CD8-positive, alpha-beta memory T cell (primary cell): ENCODE measurements at regions of chr1 and their contacts with region 1.

Region 1: GRCh38 chr1:148388260-148389027 is 94.7 kb downstream of the PPIAL4G start:
- DNase-seq: peak; percentile 77 to 92 (median 84)
- H3K4me3 ChIP-seq: peak overlapping the region; percentile 56
- H3K4me3 Mint-ChIP-seq: peak overlapping the region; percentile 91 to 97 (median 94)
- H3K27ac ChIP-seq: peak overlapping the region; percentile 96
- H3K27ac Mint-ChIP-seq: peak overlapping the region; percentile 94 to 100 (median 99)
- H3K4me1 ChIP-seq: peaks cover 18% of the 10 kb centered on the region
- H3K4me1 Mint-ChIP-seq: peaks cover 24 to 47% (median 42%) of the 10 kb centered on the region in 3 donors
- H3K27me3 ChIP-seq: no peaks in the 10 kb centered on the region
- H3K27me3 Mint-ChIP-seq: no peaks in the 10 kb centered on the region

Region 2: DNA sequence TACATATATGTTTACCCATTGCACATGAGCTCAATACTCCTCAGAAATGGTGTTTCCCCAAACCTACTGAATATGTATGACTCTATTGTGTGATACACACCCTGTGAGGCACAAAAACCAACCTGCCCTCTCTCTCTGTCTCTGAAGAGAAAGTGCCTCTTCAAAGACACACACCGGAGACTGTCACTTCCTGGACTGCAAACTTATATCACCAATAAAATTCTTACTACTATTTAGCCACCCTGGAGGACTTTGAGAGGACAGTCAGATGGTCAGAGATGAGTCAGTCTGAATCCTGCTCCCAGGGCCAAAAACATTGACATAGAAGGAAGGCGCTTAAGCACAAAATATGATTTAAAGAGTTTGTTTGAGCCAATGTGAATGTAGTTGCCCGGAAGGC is 15.7 kb before region 1 on chr1:
- CTCF ChIA-PET with region 1: interaction called, 12 read pairs
- POLR2A ChIA-PET with region 1: interaction called, 17 read pairs
- DNase-seq: peak; percentile 26 to 74 (median 62)
- H3K4me3 ChIP-seq: peak overlapping the region; percentile 29
- H3K4me3 Mint-ChIP-seq: peak overlapping the region; percentile 60 to 90 (median 81)
- H3K27ac ChIP-seq: peak overlapping the region; percentile 49
- H3K27ac Mint-ChIP-seq: peak overlapping the region; percentile 90 to 99 (median 96)
- H3K4me1 ChIP-seq: peaks cover 45% of the 10 kb centered on the region
- H3K4me1 Mint-ChIP-seq: peaks cover 33 to 49% (median 43%) of the 10 kb centered on the region in 3 donors
- H3K27me3 ChIP-seq: no peaks in the 10 kb centered on the region
- H3K27me3 Mint-ChIP-seq: no peaks in the 10 kb centered on the region